ENCODE measurements at regions of chr22 and their contacts with region 1.

Region 1: GRCh38 chr22:32494971-32495370 is 20.4 kb downstream of the FBXO7 start:
- DNase-seq: no peak
- H3K4me3 ChIP-seq: no peak overlapping the region
- H3K27ac ChIP-seq: no peak overlapping the region
- H3K4me1 ChIP-seq: no peaks in the 10 kb centered on the region
- H3K27me3 ChIP-seq: no peaks in the 10 kb centered on the region
- CTCF ChIP-seq: no peak

Region 2: GRCh38 chr22:32426156-32426555 is 68.8 kb before region 1 on chr22:
- CTCF ChIA-PET with region 1: no interaction called
- dilution Hi-C with region 1: loop called (anchors 5 kb)
- in situ Hi-C with region 1: no loop called
- intact Hi-C with region 1: no loop called
- DNase-seq: no peak
- H3K4me3 ChIP-seq: no peak overlapping the region
- H3K27ac ChIP-seq: no peak overlapping the region
- H3K4me1 ChIP-seq: no peaks in the 10 kb centered on the region
- H3K27me3 ChIP-seq: peaks cover 2% of the 10 kb centered on the region
- CTCF ChIP-seq: no peak

Measured in mammary epithelial cell (primary cell).